Posterior cingulate gyrus (tissue), 11 donors: ENCODE measurements at regions of chr5 and their contacts with region 1.

Region 1: DNA sequence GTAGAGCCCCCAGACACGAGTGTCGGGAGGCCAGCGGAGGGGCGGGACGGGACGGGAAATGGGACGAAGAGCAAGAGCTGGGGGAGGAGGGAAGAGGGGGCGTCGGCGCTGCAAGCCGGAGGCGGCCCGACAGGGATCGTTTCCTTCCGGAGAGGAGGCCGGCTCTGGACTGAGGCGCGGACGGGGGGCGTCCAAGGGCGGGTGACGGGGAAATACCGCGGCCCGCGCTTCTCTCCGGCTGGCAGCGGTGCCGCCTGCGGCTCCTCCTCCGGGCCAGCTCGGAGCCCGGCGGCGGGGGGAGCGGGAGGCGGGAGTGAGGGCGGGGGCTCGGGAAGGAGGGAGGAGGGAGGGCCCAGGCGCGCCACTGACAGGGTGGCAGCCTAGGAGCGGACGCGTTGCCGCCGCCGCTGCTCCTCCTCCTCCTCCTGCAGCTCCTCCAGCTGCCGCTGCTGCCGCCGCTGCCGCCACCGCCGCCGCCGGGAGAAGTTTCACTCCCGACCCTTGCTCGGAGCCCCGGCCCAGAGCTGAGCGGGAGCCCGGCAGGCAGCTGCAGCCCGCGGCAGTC is at the start of gene CHSY3:
- DNase-seq: peak; percentile 70 to 98 (median 88)

Region 2: DNA sequence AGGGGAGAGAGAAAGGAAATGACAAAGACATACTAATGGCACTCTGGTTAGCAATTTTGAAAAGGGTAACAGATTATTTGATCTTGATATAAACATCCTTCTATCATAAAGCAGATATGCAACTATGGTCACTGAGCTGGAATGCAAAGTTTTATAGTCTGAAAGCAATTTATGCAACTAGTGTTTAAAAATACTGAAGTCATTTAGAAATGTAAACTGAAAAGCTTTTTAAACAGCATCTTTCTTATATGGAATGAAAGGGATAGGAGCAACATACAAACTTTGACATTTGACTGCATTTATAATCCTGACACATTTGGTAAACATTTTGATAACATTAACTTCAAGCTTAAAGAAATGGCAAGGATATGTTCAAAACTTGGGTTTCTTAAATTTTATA is 472.8 kb before region 1 on chr5:
- intact Hi-C with region 1: no loop called
- DNase-seq: no peak

Region 3: DNA sequence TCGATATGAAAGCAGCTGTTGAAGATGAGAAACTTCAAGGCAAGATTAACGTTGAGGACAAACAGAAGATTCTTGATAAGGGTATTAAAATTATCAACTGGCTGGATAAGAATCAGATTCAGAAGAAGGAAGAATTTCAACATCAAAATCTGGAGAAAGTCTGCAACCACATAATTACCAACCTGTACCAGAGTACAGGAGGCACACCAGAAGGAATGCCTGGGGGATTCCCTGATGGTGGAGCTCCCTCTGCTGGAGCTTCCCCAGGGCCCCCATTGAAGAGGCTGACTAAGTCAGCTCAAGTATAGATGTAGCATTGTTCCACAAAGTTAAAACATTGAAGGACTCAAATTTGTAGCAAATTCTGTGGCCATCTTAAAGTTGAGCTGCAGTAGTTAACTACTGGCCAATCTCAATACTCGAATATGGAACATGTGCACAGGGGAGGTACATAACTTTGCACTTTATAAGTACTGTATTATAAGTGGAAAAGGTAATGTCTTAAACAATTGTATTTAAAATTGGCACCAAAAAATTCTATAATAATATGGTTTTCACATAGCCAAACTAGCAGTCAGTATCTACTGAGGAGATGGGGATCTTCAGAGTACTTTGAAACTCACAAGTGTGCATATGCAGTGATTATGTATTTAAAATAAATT is 237.6 kb after region 1 on chr5:
- intact Hi-C with region 1: loop called (anchors 5 kb)
- DNase-seq: peak in 7 of 10 donors; percentile 27 to 89 (median 59)